Activated CD4-positive, alpha-beta memory T cell treated with anti-CD3 and anti-CD28 coated beads for 36 hours (primary cell): ENCODE measurements at regions of chr18 and their contacts with region 1.

Region 1: GRCh38 chr18:2606335-2606734 is 35.0 kb downstream of the NDC80 start:
- DNase-seq: no peak
- H3K4me3 Mint-ChIP-seq: peak overlapping the region; percentile 33
- H3K27ac Mint-ChIP-seq: peak overlapping the region; percentile 82
- H3K4me1 Mint-ChIP-seq: peaks cover 40% of the 10 kb centered on the region
- H3K27me3 Mint-ChIP-seq: no peaks in the 10 kb centered on the region

Region 2: GRCh38 chr18:2589345-2590068 is 16.8 kb before region 1 on chr18:
- CTCF ChIA-PET with region 1: interaction called, 3 read pairs
- POLR2A ChIA-PET with region 1: no interaction called
- intact Hi-C with region 1: loop called (anchors 2 kb)
- DNase-seq: no peak
- H3K4me3 Mint-ChIP-seq: peak overlapping the region; percentile 7
- H3K27ac Mint-ChIP-seq: peak overlapping the region; percentile 81
- H3K4me1 Mint-ChIP-seq: peaks cover 37% of the 10 kb centered on the region
- H3K27me3 Mint-ChIP-seq: no peaks in the 10 kb centered on the region

Region 3: GRCh38 chr18:2758309-2758708 is 152.0 kb after region 1 on chr18:
- CTCF ChIA-PET with region 1: no interaction called
- POLR2A ChIA-PET with region 1: no interaction called
- intact Hi-C with region 1: no loop called
- DNase-seq: no peak
- H3K4me3 Mint-ChIP-seq: no peak overlapping the region
- H3K27ac Mint-ChIP-seq: peak overlapping the region; percentile 31
- H3K4me1 Mint-ChIP-seq: peaks cover 15% of the 10 kb centered on the region
- H3K27me3 Mint-ChIP-seq: no peaks in the 10 kb centered on the region